GM10248 (cell line): ENCODE measurements at regions of chr3 and their contacts with region 1.

Region 1: GRCh38 chr3:49703443-49703927 is 14.1 kb downstream of the RNF123 start:
- DNase-seq: peak; percentile 90
- CTCF ChIP-seq: peak; percentile 85

Region 2: DNA sequence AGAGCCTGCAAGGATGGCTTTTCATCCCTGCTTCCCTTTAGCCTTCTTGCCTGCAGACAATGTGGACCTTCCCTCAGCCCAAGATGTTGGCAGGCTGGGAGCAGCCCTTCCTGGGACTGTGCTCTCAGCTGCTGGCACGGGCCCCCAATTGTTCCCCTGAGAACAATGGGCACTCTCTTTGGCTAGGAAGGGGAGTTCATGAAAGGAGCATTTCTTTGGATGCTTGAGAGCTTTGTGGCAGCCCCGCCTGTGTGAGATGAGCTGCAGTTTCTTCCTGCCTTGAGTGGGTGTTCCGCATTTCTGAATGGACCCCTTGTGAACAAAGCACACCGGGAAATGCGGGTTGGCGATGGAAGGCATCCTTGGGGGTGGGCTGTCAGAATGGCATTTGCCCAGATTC is 184.2 kb before region 1 on chr3:
- CTCF ChIA-PET with region 1: no interaction called
- POLR2A ChIA-PET with region 1: no interaction called
- DNase-seq: no peak
- CTCF ChIP-seq: no peak

Region 3: DNA sequence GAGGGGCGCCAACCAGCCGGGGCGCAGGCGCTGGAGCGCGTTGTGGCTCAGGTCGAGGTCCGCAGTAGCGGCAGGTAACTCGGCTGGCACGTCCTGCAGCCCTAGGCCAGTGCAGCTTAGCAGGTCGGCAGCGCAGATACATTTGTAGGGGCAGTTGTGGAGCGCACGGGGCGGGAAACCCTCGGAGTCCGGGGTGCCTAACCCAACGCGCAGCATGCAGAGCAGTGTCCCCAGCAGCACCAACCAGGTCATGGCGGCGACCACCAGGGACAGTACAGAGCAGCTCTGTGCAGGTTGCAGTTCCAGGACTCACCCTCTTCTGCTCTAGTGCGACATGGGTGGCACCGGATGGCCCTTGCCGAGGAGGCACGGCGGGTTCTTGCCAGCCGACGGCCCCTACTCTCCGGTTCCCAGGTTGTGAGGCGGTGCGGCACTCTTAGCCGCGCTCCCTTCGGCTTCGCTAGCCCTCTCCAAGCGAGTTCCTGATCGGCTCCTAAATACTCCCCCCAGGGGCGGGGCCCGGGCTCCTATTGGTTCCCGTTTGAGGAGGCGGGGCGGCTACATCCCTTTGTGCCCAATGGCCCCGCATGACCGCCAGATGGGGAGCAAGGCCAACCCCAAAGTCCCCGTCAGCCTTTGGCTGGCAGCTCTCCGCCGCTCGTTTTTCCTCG is 15.9 kb after region 1 on chr3 and contains the start of gene AMIGO3:
- CTCF ChIA-PET with region 1: interaction called, 37 read pairs
- POLR2A ChIA-PET with region 1: no interaction called
- DNase-seq: peak; percentile 95
- CTCF ChIP-seq: peak; percentile 49

Region 4: GRCh38 chr3:50008931-50009330 is 305.4 kb after region 1 on chr3:
- CTCF ChIA-PET with region 1: no interaction called
- POLR2A ChIA-PET with region 1: no interaction called
- DNase-seq: no peak
- CTCF ChIP-seq: no peak